Endothelial cell of umbilical vein (primary cell): ENCODE measurements at regions of chr6 and their contacts with region 1.

Region 1: GRCh38 chr6:158595223-158595622 is 35.3 kb downstream of the TMEM181 start:
- DNase-seq: peak; percentile 24
- H3K4me3 ChIP-seq: no peak overlapping the region
- H3K27ac ChIP-seq: no peak overlapping the region
- H3K4me1 ChIP-seq: peaks cover 3% of the 10 kb centered on the region
- H3K27me3 ChIP-seq: no peaks in the 10 kb centered on the region
- CTCF ChIP-seq: peak; percentile 27 to 38
- POLR2A ChIP-seq: no peak

Region 2: DNA sequence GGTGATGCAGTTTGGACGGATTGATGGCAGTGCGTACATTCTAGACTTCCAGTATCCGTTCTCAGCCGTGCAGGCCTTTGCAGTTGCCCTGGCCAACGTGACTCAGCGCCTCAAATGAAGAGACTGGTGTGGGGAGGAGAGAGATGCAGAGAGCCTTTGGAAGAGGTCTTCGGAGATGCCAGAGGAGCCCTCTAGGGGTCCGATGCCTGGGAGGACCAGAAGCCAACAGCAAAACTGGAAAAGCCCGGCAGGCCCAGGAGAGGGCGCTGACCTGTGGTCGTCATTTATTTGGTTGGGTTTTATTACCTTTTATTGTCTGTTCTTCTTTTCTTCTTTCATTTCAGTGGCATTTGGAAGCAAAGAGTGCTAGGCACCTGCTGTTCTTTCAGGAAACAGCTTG is 88.6 kb before region 1 on chr6:
- CTCF ChIA-PET with region 1: no interaction called
- POLR2A ChIA-PET with region 1: no interaction called
- dilution Hi-C with region 1: no loop called
- intact Hi-C with region 1: loop called (anchors 5 kb)
- DNase-seq: peak; percentile 8
- H3K4me3 ChIP-seq: no peak overlapping the region
- H3K27ac ChIP-seq: no peak overlapping the region
- H3K4me1 ChIP-seq: no peaks in the 10 kb centered on the region
- H3K27me3 ChIP-seq: no peaks in the 10 kb centered on the region
- CTCF ChIP-seq: peak; percentile 50 to 53
- POLR2A ChIP-seq: no peak